ENCODE measurements at regions of chr13 and their contacts with region 1.

Region 1: DNA sequence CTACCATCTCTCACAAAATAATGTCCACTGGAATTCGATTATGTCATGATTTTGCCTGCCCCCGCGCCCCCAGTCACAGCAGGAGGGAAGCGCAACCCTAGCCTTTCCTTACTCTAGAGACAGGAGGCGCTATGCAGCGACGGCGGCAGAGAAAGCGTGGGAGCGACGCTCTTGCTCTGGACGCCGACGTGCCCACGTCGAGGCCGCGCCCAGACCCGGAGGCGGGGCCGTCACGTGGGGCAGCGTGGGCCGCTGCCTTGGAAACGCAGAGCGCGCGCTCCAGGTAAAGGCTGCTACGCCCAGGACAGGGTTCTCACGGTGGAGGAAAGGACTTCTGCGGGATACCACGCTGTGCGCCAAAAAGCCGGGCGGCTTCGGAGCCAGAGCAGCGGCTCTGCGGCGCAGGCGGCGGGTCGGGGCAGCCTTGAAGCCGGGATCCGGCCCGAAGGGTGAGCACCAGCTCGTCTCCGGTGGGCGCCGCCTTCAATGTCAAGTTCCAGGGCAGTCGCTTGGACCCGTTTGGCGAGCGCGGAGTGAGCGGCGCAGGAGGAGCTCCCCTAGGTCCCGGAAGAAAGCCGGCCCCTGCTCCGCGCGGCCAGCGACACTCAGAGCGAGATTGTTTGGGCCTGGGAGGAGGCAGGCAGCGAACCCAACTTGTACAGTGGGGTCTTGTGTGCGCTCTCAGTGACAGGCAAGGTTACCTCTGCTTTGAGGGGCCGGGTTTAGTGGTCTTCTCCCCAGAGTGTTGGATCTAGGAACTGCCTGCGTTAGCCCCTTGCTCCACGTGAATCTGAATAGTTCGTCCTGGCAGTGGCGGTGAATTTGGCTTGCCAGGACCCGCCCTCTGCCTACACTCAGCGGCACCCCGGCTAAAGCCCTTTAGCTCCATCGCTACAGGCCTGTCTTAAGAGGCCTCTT is 121.7 kb downstream of the MRPL57 start:
- DNase-seq: peak; percentile 78 to 89 (median 83)
- H3K4me3 ChIP-seq: peak overlapping the region; percentile 80
- H3K4me3 Mint-ChIP-seq: peak overlapping the region; percentile 82 to 95 (median 88)
- H3K27ac ChIP-seq: peak overlapping the region; percentile 66
- H3K27ac Mint-ChIP-seq: peak overlapping the region; percentile 54 to 92 (median 82)
- H3K4me1 ChIP-seq: peaks cover 11% of the 10 kb centered on the region
- H3K4me1 Mint-ChIP-seq: peaks cover 20 to 27% (median 20%) of the 10 kb centered on the region in 3 donors
- H3K27me3 ChIP-seq: no peaks in the 10 kb centered on the region
- H3K27me3 Mint-ChIP-seq: no peaks in the 10 kb centered on the region

Region 2: DNA sequence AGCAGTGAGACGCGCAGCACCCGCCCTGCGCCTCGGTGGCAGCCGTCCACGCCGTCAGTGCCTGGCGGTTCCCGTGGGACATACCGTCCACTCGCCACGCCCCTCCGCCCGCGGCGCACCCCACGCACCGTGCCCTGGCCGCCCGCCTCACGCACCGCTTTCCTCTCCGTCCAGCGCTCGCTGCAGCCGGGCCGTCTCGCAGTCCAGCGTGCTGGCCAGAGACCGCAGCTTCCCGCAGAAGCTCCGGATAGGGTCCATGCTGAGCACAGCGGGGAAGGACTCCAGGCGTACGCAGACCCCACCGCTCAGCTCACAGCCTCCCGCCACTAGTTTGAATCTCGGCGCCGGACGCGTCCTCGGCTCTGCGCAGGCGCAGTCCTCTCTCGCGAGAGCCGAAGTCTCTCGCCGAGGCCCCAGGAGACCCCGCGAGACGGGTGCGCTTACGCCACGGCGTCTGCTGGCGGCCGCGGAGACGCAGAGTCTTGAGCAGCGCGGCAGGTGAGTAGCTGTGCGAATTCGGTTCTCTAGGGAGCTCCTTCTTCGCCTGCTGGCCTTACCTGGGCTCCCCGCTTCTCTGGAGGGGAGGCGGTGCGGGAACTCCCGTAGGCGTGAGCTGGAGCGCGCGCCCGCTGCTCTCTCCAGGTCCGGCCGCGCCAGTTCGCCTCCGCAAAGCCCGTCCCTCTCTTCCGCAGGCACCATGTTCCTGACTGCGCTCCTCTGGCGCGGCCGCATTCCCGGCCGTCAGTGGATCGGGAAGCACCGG is 121.8 kb before region 1 on chr13 and contains the starts of genes MRPL57 and SKA3:
- CTCF ChIA-PET with region 1: interaction called, 16 read pairs
- POLR2A ChIA-PET with region 1: no interaction called
- DNase-seq: peak; percentile 89 to 96 (median 93)
- H3K4me3 ChIP-seq: peak within 1 kb of the TSS; percentile 57
- H3K4me3 Mint-ChIP-seq: peak within 1 kb of the TSS; percentile 96 to 100 (median 97)
- H3K27ac ChIP-seq: peak within 1 kb of the TSS; percentile 82
- H3K27ac Mint-ChIP-seq: peak within 1 kb of the TSS; percentile 94 to 99 (median 96)
- H3K4me1 ChIP-seq: peaks cover 17% of the 10 kb centered on the region
- H3K4me1 Mint-ChIP-seq: peaks cover 15 to 37% (median 25%) of the 10 kb centered on the region in 3 donors
- H3K27me3 ChIP-seq: no peaks in the 10 kb centered on the region
- H3K27me3 Mint-ChIP-seq: no peaks in the 10 kb centered on the region
- total RNA-seq, gene MRPL57: 28.4 to 28.8 TPM
- total RNA-seq, gene SKA3: 28.3 to 33.3 TPM

Region 3: GRCh38 chr13:21181671-21182070 is 116.5 kb before region 1 on chr13:
- CTCF ChIA-PET with region 1: interaction called, 16 read pairs
- POLR2A ChIA-PET with region 1: interaction called, 11 read pairs
- DNase-seq: no peak
- H3K4me3 ChIP-seq: no peak overlapping the region
- H3K4me3 Mint-ChIP-seq: no peak overlapping the region
- H3K27ac ChIP-seq: no peak overlapping the region
- H3K27ac Mint-ChIP-seq: no peak overlapping the region
- H3K4me1 ChIP-seq: peaks cover 12% of the 10 kb centered on the region
- H3K4me1 Mint-ChIP-seq: peaks cover 10 to 26% (median 18%) of the 10 kb centered on the region in 3 donors
- H3K27me3 ChIP-seq: no peaks in the 10 kb centered on the region
- H3K27me3 Mint-ChIP-seq: no peaks in the 10 kb centered on the region

Region 4: DNA sequence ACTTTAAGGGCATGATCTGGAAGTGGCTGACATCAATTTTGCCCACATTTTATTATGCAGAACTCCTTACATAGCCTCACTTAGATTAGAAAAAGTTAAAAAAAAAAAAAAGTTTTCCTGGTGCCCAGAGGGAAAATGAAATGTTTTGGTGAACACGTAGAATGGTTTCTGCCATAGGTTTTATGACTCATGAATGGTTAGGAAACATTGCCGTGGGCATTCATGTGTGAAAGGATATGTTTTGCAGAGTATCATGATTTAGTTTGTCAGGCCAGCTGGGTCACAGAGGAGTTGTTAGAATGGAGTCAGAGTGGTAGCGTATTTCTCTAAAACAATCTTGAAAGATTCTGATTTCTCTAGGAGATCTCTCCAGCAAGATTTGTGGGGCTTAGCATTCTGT is 12.0 kb after region 1 on chr13:
- CTCF ChIA-PET with region 1: interaction called, 11 read pairs
- POLR2A ChIA-PET with region 1: no interaction called
- DNase-seq: no peak
- H3K4me3 ChIP-seq: no peak overlapping the region
- H3K4me3 Mint-ChIP-seq: no peak overlapping the region
- H3K27ac ChIP-seq: no peak overlapping the region
- H3K27ac Mint-ChIP-seq: no peak overlapping the region
- H3K4me1 ChIP-seq: no peaks in the 10 kb centered on the region
- H3K4me1 Mint-ChIP-seq: peaks cover 0 to 5% (median 2%) of the 10 kb centered on the region in 3 donors
- H3K27me3 ChIP-seq: no peaks in the 10 kb centered on the region
- H3K27me3 Mint-ChIP-seq: no peaks in the 10 kb centered on the region

Region 5: GRCh38 chr13:21326155-21327031 is 28.2 kb after region 1 on chr13:
- CTCF ChIA-PET with region 1: no interaction called
- POLR2A ChIA-PET with region 1: no interaction called
- DNase-seq: peak in 1 of 5 donors; percentile 18
- H3K4me3 ChIP-seq: peak overlapping the region; percentile 26
- H3K4me3 Mint-ChIP-seq: peak overlapping the region in 4 of 7 donors; percentile 15 to 67 (median 60)
- H3K27ac ChIP-seq: no peak overlapping the region
- H3K27ac Mint-ChIP-seq: no peak overlapping the region
- H3K4me1 ChIP-seq: no peaks in the 10 kb centered on the region
- H3K4me1 Mint-ChIP-seq: peaks cover 25 to 41% (median 40%) of the 10 kb centered on the region in 3 donors
- H3K27me3 ChIP-seq: no peaks in the 10 kb centered on the region
- H3K27me3 Mint-ChIP-seq: peaks cover 0 to 2% of the 10 kb centered on the region in 2 donors

Region 6: DNA sequence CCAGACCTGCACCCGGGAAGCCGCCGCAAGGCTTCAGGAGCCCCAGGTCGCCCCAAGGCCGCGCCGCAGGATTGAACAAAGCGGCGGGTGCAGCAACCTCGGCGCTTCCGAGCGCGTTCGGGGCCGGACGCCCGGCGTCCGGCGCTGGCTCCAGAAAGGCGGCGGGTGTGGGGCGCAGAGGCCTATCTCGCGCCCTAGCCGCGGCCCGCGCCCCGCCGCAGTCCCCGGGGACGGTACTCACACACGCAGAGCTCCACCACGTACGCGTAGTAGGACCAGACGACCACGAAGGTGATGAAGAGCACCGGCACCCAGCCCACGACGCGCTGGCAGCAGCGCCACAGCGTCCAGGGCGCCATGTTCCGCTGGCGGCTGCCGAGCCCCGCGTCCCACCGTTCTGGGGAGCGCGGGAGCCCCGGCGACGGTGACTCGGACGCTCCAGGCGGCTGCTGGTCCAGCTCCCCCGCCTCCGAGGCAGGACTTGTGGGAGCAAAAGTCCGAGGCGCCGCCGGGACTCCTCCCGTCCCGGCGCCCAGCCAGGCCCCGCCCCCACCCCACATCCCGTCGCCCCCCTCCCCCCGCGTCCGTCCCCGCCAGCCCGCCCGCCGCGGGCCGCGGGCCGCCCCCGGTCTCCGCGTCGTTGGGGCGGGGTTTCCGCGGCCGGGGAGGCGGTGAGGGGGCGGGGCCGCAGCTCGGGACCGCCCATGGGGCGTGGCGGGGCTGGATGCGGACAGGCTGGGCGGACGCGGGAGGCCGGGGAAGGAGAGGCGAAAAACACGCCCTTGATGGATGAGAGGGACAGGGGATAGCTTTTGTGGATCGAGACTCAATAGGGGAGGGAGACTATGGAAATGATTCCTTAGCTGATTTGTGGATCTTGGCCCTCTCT is 160.9 kb after region 1 on chr13 and contains the start of gene ZDHHC20:
- CTCF ChIA-PET with region 1: interaction called, 18 read pairs
- POLR2A ChIA-PET with region 1: interaction called, 6 read pairs
- DNase-seq: peak; percentile 84 to 91 (median 87)
- H3K4me3 ChIP-seq: peak within 1 kb of the TSS; percentile 76
- H3K4me3 Mint-ChIP-seq: peak within 1 kb of the TSS; percentile 94 to 97 (median 96)
- H3K27ac ChIP-seq: peak within 1 kb of the TSS; percentile 87
- H3K27ac Mint-ChIP-seq: peak within 1 kb of the TSS; percentile 93 to 98 (median 94)
- H3K4me1 ChIP-seq: peaks cover 28% of the 10 kb centered on the region
- H3K4me1 Mint-ChIP-seq: peaks cover 41 to 53% (median 47%) of the 10 kb centered on the region in 3 donors
- H3K27me3 ChIP-seq: no peaks in the 10 kb centered on the region
- H3K27me3 Mint-ChIP-seq: peaks cover 0 to 4% of the 10 kb centered on the region in 2 donors
- total RNA-seq, gene ZDHHC20: 50.4 to 58.8 TPM